Sigmoid colon (tissue), 7 donors: ENCODE measurements at regions of chr4 and their contacts with region 1.

Region 1: DNA sequence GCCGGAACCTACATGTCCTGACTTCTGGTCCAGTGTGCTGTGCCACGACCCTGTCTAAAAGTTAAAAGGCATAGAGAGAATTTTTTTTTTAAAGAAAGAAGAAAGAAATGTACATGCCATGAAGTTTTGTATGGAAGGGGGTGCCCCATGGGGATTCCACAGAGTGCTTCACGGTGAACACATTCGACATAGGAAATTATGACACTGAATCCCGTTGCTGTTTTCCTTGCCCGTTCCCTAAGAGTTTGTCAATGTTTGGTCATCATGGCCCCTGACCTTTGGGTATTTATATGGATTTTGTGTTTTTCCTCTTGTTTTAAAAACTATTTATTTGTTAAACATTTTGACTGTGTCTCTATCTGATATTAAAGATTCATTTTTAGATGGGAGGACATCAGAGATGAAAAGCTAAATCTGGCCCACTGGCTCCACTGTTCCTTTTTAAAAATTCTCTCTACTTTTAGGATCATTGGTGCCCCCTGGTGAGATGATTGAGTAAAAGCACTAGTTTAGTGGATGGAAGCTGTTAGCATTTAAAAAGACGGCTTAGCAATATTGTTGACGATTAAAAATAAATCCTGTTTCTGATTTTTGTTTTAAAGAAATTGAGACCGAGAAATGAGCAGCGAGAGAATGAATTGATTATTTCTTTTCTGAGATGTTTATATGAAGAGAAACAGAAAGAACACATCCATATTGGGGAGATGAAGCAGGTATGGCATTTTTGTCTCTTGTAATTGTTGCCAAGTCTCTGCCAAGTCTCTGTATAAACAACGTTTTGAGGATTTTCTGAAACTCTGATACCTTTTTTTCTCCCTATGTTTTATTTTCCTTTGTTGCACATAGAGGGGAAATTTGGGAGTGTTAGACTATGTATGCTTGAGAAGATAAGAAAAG is 75.0 kb downstream of the PTTG2 start:
- DNase-seq: no peak
- H3K4me3 ChIP-seq: no peak overlapping the region
- H3K27ac ChIP-seq: peak overlapping the region; percentile 39 to 62 (median 57)
- H3K4me1 ChIP-seq: peaks cover 0 to 43% (median 33%) of the 10 kb centered on the region in 4 donors
- H3K27me3 ChIP-seq: no peaks in the 10 kb centered on the region
- CTCF ChIP-seq: peak; percentile 55 to 79 (median 65)
- EP300 ChIP-seq: no peak
- POLR2A ChIP-seq: no peak

Region 2: GRCh38 chr4:37802068-37802666 is 233.1 kb before region 1 on chr4:
- intact Hi-C with region 1: loop called (anchors 2 kb)
- DNase-seq: no peak
- H3K4me3 ChIP-seq: no peak overlapping the region
- H3K27ac ChIP-seq: no peak overlapping the region
- H3K4me1 ChIP-seq: peaks cover 0 to 18% (median 10%) of the 10 kb centered on the region in 4 donors
- H3K27me3 ChIP-seq: no peaks in the 10 kb centered on the region
- CTCF ChIP-seq: peak in 3 of 4 experiments; percentile 18 to 59 (median 38)
- EP300 ChIP-seq: no peak
- POLR2A ChIP-seq: no peak

Region 3: GRCh38 chr4:37826295-37827029 is 208.8 kb before region 1 on chr4 and contains the start of gene PGM2:
- intact Hi-C with region 1: loop called (anchors 5 kb)
- DNase-seq: peak; percentile 93
- H3K4me3 ChIP-seq: peak within 1 kb of the TSS; percentile 71 to 87 (median 83)
- H3K27ac ChIP-seq: peak within 1 kb of the TSS; percentile 83 to 94 (median 84)
- H3K4me1 ChIP-seq: peaks cover 0 to 34% (median 22%) of the 10 kb centered on the region in 4 donors
- H3K27me3 ChIP-seq: no peaks in the 10 kb centered on the region
- CTCF ChIP-seq: peak in 1 of 4 experiments; percentile 7
- EP300 ChIP-seq: peak in 1 of 4 donors; percentile 4
- POLR2A ChIP-seq: peak; percentile 76 to 88
- total RNA-seq, gene PGM2: 30.0 to 42.3 (median 33.8) TPM

Region 4: DNA sequence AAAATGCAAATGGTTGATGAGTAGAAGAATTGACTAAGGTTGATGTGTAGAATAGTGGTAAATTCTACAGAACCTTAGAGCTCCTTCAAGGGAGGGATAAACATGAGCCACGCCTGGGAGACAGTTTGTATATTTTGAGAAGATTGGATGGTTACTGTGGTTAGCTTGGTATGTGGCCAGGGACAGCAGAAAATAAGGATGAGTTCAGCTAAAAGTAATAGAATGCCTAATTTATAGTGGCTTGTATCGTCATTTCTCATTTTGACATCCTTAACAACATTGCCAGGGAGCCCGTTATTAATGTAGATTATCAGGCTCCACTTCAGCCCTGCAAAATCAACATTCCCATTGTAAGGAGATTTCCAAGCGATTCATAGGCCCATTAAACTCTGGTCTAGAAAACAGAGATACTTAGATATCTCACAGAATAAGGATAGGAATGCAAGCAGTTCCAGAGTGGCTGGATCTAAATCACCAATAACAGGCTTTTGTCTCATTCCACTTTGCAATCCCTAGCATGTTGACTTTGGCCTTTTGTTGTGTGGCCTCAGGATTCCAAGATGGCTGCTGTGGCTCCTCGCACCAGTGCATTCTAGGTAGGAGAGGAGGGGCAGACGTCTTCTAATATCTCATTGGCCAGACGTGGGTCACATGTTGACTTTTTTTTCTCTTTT is 81.5 kb before region 1 on chr4:
- intact Hi-C with region 1: no loop called
- DNase-seq: no peak
- H3K4me3 ChIP-seq: no peak overlapping the region
- H3K27ac ChIP-seq: peak overlapping the region in 1 of 4 donors; percentile 65
- H3K4me1 ChIP-seq: peaks cover 0 to 52% (median 29%) of the 10 kb centered on the region in 4 donors
- H3K27me3 ChIP-seq: no peaks in the 10 kb centered on the region
- CTCF ChIP-seq: no peak
- EP300 ChIP-seq: no peak
- POLR2A ChIP-seq: no peak

Region 5: GRCh38 chr4:37994569-37994968 is 40.7 kb before region 1 on chr4:
- intact Hi-C with region 1: no loop called
- DNase-seq: no peak
- H3K4me3 ChIP-seq: no peak overlapping the region
- H3K27ac ChIP-seq: peak overlapping the region; percentile 58 to 98 (median 72)
- H3K4me1 ChIP-seq: peaks cover 0 to 92% (median 80%) of the 10 kb centered on the region in 4 donors
- H3K27me3 ChIP-seq: no peaks in the 10 kb centered on the region
- CTCF ChIP-seq: no peak
- EP300 ChIP-seq: no peak
- POLR2A ChIP-seq: no peak

Region 6: DNA sequence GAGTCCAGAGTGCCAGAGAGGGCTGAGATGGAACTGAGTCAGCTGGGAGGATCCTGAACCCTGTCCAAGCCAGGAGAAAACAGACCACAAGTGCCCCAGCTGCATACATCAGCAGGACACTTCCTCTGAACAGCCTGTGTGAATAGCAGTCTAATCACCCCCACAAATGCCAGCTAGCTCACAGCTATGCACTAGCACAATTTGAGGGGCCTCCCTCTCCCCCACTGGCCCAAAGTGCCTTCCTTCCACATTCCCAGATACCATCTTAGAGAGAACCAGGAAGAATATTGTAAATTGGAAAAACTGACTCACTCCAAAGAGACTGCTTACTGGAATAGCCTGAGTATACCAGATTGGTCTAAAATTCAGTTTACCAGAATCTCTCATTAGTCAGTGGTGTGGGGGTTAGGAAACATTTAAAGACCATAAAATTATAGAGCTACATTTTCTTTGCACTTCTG is 336.2 kb after region 1 on chr4:
- intact Hi-C with region 1: no loop called
- DNase-seq: no peak
- H3K4me3 ChIP-seq: no peak overlapping the region
- H3K27ac ChIP-seq: no peak overlapping the region
- H3K4me1 ChIP-seq: peaks cover 0 to 32% (median 16%) of the 10 kb centered on the region in 4 donors
- H3K27me3 ChIP-seq: no peaks in the 10 kb centered on the region
- CTCF ChIP-seq: no peak
- EP300 ChIP-seq: no peak
- POLR2A ChIP-seq: no peak